AG04450 (cell line): ENCODE measurements at regions of chr15 and their contacts with region 1.

Region 1: GRCh38 chr15:75367913-75368688 is at the start of gene MAN2C1:
- DNase-seq: peak; percentile 84
- H3K4me3 ChIP-seq: peak within 1 kb of the TSS; percentile 83
- H3K27ac ChIP-seq: peak within 1 kb of the TSS; percentile 93
- H3K27me3 ChIP-seq: no peaks in the 10 kb centered on the region
- CTCF ChIP-seq: peak; percentile 76
- polyA plus RNA-seq, gene MAN2C1: 32.5 and 37.9 TPM in 2 replicates

Region 2: GRCh38 chr15:75347222-75347878 is 20.8 kb before region 1 on chr15:
- CTCF ChIA-PET with region 1: no interaction called
- POLR2A ChIA-PET with region 1: interaction called, 10 read pairs
- DNase-seq: no peak
- H3K4me3 ChIP-seq: peak overlapping the region; percentile 69
- H3K27ac ChIP-seq: no peak overlapping the region
- H3K27me3 ChIP-seq: peaks cover 22% of the 10 kb centered on the region
- CTCF ChIP-seq: no peak